ENCODE measurements at regions of chr6 and their contacts with region 1.

Region 1: GRCh38 chr6:141587482-141588266 is 545.1 kb upstream of the GJE1 start:
- DNase-seq: no peak
- ATAC-seq: no peak

Region 2: GRCh38 chr6:141174932-141175331 is 412.7 kb before region 1 on chr6:
- intact Hi-C with region 1: no loop called
- DNase-seq: no peak
- ATAC-seq: no peak

Region 3: GRCh38 chr6:141464490-141464889 is 123.2 kb before region 1 on chr6:
- intact Hi-C with region 1: no loop called
- DNase-seq: no peak
- ATAC-seq: no peak

Region 4: DNA sequence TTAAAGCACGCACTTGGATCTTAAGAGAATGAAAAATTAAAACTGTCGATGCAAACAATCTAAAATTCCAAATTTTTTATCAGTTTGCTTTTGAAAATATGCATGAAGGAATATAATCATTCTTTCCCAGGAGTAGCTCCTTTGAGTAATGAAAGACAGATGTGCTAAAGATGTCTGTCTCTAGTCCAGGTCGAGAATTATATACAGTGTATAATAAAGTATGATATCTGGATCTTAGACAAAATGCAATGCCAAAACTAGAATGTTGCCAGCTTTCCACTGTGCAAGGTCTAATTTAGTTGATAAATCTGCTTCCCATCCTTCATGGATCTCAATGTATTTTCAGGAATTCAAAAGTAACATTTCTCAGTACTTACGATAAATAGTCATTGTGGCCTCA is 649.0 kb after region 1 on chr6:
- intact Hi-C with region 1: loop called in 1 of 2 experiments (anchors 10 kb)
- DNase-seq: no peak
- ATAC-seq: no peak

Measured in left colon (tissue), 2 donors.